ENCODE measurements at regions of chr1 and their contacts with region 1.

Region 1: DNA sequence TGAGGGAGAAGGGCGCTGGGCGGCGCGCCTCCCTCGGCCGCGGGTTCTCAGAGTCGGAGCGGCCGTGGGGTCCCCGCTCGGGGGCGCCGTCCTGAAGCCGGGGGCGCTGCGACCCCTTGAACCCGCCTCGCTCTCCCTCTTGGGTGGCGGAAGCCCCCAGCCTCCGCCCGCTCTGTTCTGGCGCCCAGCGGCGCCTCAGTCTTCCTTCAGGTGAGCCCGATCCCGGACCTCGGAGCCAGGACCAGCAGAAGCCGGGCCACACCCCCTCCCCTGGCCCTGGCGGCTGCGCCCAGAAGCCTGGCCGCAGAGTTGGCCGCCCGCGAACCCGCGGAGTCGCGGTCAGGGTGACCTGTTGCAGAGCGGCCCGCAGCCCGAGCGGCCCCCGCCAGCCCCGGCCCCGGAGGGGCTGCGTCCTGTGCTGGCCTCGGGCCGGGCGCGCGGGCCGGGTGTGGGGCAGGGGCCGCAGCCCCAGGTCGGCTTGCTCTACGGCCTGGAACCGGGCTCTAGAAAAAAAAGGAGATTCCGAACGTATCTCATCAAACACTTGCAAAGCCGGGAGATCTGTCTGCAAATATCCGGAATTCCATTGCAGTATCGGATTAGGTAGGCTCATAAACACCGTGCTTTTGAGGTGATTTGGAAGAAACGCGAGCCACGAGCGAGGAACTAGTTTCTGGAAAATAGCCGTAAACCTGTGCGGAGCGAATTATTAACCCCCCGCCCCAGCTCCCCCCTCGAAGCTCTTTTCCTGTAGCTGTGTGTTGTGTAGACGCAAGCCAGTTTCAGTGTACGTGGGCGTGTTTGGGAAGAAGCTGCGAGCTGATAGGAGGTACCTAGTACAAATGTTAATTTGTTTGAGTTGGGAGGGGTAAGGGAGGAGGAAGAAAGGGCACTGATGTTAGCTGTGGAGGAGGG is 816 bp downstream of the RALGPS2 start:
- DNase-seq: peak; percentile 69 to 88
- H3K4me3 ChIP-seq: peak overlapping the region; percentile 84
- H3K27ac ChIP-seq: peak overlapping the region; percentile 83
- H3K4me1 ChIP-seq: peaks cover 36% of the 10 kb centered on the region
- H3K27me3 ChIP-seq: no peaks in the 10 kb centered on the region
- CTCF ChIP-seq: no peak

Region 2: GRCh38 chr1:178434360-178434759 is 291.5 kb before region 1 on chr1:
- CTCF ChIA-PET with region 1: interaction called, 13 read pairs
- POLR2A ChIA-PET with region 1: no interaction called
- intact Hi-C with region 1: no loop called
- DNase-seq: no peak
- H3K4me3 ChIP-seq: no peak overlapping the region
- H3K27ac ChIP-seq: no peak overlapping the region
- H3K4me1 ChIP-seq: no peaks in the 10 kb centered on the region
- H3K27me3 ChIP-seq: no peaks in the 10 kb centered on the region
- CTCF ChIP-seq: no peak

Region 3: DNA sequence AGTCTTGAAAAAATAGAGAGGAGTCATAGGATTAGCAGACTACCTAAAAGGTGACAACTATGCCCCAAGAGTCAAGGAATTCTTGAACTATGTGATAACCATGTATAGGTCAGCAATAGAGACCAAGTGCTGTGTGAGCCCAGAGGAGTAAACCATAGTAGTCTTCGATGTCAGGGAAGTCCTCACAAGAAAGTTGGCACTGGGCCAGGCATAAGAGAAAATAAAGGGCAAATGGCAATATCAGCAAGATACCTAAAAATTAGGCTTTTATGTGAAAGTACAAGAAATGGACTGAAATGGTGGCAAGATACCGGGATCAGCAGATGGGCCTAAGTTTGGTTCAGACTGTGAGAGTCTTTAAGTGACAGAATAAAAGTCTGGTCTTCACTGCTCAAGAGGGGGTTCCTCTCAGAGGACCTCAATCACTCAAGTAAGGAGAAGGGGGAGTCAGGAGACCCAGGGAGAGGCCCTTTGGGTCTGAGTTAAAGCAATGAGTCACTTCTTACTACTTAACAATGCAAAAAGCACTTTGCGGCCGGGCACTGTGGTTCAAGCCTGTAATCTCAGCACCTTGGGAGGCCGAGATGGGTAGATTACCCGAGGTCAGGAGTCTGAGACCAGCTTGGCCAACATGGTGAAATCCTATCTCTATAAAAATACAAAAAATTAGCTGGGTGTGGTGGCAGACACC is 118.0 kb before region 1 on chr1:
- CTCF ChIA-PET with region 1: interaction called, 8 read pairs
- POLR2A ChIA-PET with region 1: interaction called, 12 read pairs
- intact Hi-C with region 1: loop called (anchors 1 kb)
- DNase-seq: no peak
- H3K4me3 ChIP-seq: no peak overlapping the region
- H3K27ac ChIP-seq: peak overlapping the region; percentile 92
- H3K4me1 ChIP-seq: peaks cover 44% of the 10 kb centered on the region
- H3K27me3 ChIP-seq: no peaks in the 10 kb centered on the region
- CTCF ChIP-seq: no peak

Region 4: DNA sequence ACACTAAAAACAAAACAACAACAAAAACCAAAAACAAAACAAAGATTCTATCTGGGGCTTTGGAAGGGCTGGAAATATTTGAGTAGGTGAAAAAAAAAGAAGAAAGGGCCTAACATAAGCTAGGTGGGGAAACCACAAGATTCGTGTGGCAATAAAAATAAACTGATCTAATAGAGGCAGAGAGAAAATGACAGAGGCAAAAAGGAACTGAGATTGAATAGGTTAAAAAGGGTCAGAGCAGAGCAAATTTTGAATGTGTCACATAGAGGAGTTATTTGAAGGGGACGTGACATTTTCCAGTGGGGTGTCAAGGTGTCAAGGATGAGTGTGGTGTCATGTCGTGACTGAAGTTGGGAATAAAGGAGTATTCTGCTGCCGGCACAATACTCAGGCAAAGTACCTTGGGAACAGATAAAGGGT is 66.1 kb before region 1 on chr1:
- CTCF ChIA-PET with region 1: no interaction called
- POLR2A ChIA-PET with region 1: interaction called, 5 read pairs
- intact Hi-C with region 1: loop called (anchors 5 kb)
- DNase-seq: no peak
- H3K4me3 ChIP-seq: no peak overlapping the region
- H3K27ac ChIP-seq: no peak overlapping the region
- H3K4me1 ChIP-seq: peaks cover 42% of the 10 kb centered on the region
- H3K27me3 ChIP-seq: no peaks in the 10 kb centered on the region
- CTCF ChIP-seq: no peak

Region 5: DNA sequence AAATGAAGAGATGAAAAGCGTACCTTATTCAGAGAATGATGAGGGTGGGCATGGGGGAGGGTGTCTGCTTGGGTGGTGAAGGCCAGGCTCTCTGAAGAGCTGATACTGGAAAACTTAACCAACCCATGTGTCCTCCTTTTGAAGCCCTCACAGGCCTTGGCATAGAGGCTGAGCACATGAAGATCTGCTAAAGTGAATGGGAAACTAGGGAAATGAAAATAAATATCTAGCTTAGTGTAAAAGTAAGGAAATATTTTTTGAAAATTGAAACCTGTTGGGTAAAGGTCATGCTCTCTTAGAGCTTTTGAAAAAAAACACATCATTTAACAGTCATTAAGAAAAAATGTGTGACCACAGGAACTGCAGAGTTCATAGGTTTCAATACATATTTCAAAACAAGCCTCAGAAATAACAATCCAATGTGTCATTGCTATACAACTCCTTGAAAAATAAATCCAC is 41.3 kb before region 1 on chr1:
- CTCF ChIA-PET with region 1: no interaction called
- POLR2A ChIA-PET with region 1: interaction called, 14 read pairs
- intact Hi-C with region 1: no loop called
- DNase-seq: peak; percentile 16 to 97
- H3K4me3 ChIP-seq: peak overlapping the region; percentile 21; the same call in 1 of the 2 replicates
- H3K27ac ChIP-seq: peak overlapping the region; percentile 96
- H3K4me1 ChIP-seq: peaks cover 49% of the 10 kb centered on the region
- H3K27me3 ChIP-seq: no peaks in the 10 kb centered on the region
- CTCF ChIP-seq: no peak

Region 6: DNA sequence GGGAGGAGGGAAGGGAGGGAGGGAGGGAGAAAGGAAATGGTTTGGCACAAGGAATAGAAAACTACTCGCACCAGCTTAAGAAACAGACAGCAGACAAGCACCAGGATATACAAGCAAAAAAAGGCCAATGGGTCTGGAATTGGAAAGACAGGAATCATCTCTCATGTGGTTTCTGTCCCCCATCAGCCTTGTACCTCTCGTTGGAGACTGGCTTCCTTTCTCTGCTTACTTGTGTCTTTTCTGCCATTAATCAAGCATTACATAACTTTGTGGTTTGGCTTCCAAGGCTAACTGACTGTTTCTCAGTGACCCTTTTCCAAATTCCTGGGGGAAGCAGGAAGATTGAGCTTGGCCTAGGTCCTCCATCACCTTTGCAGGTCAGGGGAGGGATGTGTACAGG is 12.6 kb before region 1 on chr1:
- CTCF ChIA-PET with region 1: no interaction called
- POLR2A ChIA-PET with region 1: no interaction called
- intact Hi-C with region 1: no loop called
- DNase-seq: no peak
- H3K4me3 ChIP-seq: no peak overlapping the region
- H3K27ac ChIP-seq: no peak overlapping the region
- H3K4me1 ChIP-seq: no peaks in the 10 kb centered on the region
- H3K27me3 ChIP-seq: no peaks in the 10 kb centered on the region
- CTCF ChIP-seq: no peak

Region 7: DNA sequence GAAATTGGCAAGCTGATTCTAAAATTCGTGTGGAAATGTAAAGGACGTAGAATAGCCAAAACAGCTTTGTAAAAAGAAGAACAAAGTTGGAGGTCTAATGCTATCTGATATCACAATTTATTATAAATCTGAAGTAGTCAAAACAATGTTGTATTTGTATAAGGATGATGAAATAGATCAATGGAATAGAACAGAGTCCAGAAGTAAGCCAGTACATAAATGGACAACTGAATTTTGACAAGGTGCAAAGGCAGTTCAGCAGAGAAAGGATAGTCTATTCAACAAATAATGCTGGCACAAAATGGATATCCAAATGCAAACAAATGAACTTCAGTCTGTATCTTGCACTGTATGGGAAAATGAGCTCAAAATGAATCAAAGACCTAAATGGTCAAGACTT is 19.4 kb after region 1 on chr1:
- CTCF ChIA-PET with region 1: no interaction called
- POLR2A ChIA-PET with region 1: no interaction called
- intact Hi-C with region 1: no loop called
- DNase-seq: no peak
- H3K4me3 ChIP-seq: no peak overlapping the region
- H3K27ac ChIP-seq: 0 out of 2 replicates have a peak overlapping the region, but pooled peaks have one; percentile 16
- H3K4me1 ChIP-seq: no peaks in the 10 kb centered on the region
- H3K27me3 ChIP-seq: no peaks in the 10 kb centered on the region
- CTCF ChIP-seq: no peak

Region 8: GRCh38 chr1:178847396-178847849 is 121.6 kb after region 1 on chr1:
- CTCF ChIA-PET with region 1: no interaction called
- POLR2A ChIA-PET with region 1: interaction called, 13 read pairs
- intact Hi-C with region 1: no loop called
- DNase-seq: peak in 1 of 2 experiments; percentile 59
- H3K4me3 ChIP-seq: no peak overlapping the region
- H3K27ac ChIP-seq: peak overlapping the region; percentile 45
- H3K4me1 ChIP-seq: peaks cover 18% of the 10 kb centered on the region
- H3K27me3 ChIP-seq: no peaks in the 10 kb centered on the region
- CTCF ChIP-seq: no peak

Region 9: GRCh38 chr1:179016747-179017549 is 291.1 kb after region 1 on chr1:
- CTCF ChIA-PET with region 1: interaction called, 3 read pairs
- POLR2A ChIA-PET with region 1: no interaction called
- intact Hi-C with region 1: loop called (anchors 5 kb)
- DNase-seq: peak; percentile 94 to 95
- H3K4me3 ChIP-seq: peak overlapping the region; percentile 28; the same call in 1 of the 2 replicates
- H3K27ac ChIP-seq: peak overlapping the region; percentile 76
- H3K4me1 ChIP-seq: peaks cover 39% of the 10 kb centered on the region
- H3K27me3 ChIP-seq: no peaks in the 10 kb centered on the region
- CTCF ChIP-seq: no peak

Region 10: DNA sequence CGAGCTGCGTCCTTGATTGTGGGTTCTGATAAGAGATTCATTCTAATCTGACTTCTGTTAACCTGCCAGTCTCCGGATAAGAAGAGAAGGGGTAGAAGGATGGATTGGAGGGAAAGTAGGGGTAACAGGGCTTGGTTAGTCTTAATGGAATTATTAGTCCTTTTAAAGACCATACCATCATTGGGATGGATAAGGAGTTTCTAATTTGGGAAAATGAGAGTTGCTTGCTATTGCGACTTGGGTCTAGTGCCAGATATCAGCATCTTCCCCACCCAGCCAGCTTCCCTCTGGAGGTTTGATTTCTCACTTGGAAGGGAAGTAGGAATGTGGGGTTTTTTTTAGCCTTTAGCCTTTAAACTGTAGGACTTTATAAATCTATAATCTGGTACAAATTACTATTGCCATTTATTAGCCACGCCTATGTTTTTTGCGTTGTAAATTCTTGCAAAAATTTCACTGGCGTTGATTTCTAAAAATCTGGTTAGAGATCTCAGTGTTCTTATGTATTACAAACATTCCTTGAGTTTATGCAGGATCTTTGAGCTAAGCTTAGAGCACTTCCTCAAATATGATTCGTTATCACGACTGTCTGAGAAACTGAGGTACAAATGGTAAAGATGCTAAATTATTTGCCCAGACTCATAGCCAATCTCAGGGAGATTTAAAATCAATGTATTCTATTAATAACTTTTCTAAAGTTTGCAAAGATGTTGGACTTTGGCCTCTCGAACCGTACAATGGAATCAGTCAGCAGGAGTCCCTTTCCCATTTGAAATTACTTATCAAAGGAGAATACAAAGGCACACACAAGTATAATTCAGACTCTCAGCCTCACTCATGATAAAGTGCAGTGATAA is 301.2 kb after region 1 on chr1:
- CTCF ChIA-PET with region 1: no interaction called
- POLR2A ChIA-PET with region 1: no interaction called
- intact Hi-C with region 1: no loop called
- DNase-seq: no peak
- H3K4me3 ChIP-seq: peak overlapping the region; percentile 93
- H3K27ac ChIP-seq: peak overlapping the region; percentile 98
- H3K4me1 ChIP-seq: peaks cover 53% of the 10 kb centered on the region
- H3K27me3 ChIP-seq: no peaks in the 10 kb centered on the region
- CTCF ChIP-seq: no peak

Measured in PC-9 (cell line).